ENCODE measurements at regions of chr5 and their contacts with region 1.

Region 1: GRCh38 chr5:180935203-180935602 is 36.2 kb downstream of the BTNL8 start:
- DNase-seq: no peak
- ATAC-seq: no peak
- H3K4me3 ChIP-seq: no peak overlapping the region
- H3K27ac ChIP-seq: no peak overlapping the region
- H3K4me1 ChIP-seq: no peaks in the 10 kb centered on the region
- H3K27me3 ChIP-seq: no peaks in the 10 kb centered on the region
- CTCF ChIP-seq: no peak
- POLR2A ChIP-seq: no peak
- RAD21 ChIP-seq: no peak

Region 2: DNA sequence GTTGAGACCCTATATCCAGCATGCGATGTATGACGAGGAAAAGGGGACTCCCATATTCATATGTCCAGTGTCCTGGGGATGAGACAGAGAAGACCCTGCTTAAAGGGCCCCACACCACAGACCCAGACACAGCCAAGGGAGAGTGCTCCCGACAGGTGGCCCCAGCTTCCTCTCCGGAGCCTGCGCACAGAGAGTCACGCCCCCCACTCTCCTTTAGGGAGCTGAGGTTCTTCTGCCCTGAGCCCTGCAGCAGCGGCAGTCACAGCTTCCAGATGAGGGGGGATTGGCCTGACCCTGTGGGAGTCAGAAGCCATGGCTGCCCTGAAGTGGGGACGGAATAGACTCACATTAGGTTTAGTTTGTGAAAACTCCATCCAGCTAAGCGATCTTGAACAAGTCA is 70.6 kb after region 1 on chr5:
- CTCF ChIA-PET with region 1: no interaction called
- POLR2A ChIA-PET with region 1: no interaction called
- dilution Hi-C with region 1: no loop called
- in situ Hi-C with region 1: loop called (anchors 5 kb)
- intact Hi-C with region 1: no loop called
- DNase-seq: no peak
- ATAC-seq: no peak
- H3K4me3 ChIP-seq: no peak overlapping the region
- H3K27ac ChIP-seq: no peak overlapping the region
- H3K4me1 ChIP-seq: no peaks in the 10 kb centered on the region
- H3K27me3 ChIP-seq: no peaks in the 10 kb centered on the region
- CTCF ChIP-seq: no peak
- POLR2A ChIP-seq: no peak
- RAD21 ChIP-seq: no peak

Region 3: DNA sequence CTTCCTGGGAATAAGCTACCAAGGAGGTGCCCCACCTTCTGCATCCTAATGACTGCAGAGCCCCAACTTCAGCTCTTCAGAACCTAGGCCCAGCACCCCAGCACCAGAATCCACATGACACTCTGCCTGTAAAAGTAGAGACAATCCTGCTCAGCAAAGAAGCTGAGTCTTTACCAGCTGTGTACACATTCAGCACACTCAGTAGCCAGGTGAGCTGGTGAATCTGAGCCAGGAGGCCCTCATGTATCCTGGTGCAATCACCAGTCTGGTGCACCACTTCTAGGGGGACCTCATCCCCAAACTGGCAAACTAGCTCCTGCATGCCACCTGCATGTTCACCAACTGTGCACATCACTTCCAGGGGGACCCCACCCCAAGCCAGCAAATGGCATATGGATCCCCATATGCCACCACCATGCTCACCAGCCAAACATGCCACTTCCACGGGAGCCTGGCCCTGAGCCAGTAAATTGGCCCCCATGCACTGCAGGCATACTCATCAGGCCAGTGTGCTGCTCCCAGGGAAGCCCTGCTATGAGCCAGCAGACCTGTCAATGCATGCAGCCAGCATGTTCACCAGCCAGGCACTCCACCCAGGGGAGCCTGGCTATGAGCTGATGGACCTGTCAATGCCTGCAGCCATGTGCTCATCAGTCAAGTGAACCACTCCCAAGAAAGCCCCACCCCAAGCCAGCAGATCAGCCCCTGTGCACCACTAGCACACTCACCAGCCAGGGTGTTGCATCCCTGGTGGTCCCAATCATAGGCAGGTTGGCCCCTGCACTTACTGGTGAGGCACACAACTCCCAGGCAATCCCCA is 89.3 kb after region 1 on chr5:
- CTCF ChIA-PET with region 1: no interaction called
- POLR2A ChIA-PET with region 1: no interaction called
- dilution Hi-C with region 1: no loop called
- in situ Hi-C with region 1: no loop called
- intact Hi-C with region 1: loop called (anchors 5 kb)
- DNase-seq: no peak
- ATAC-seq: no peak
- H3K4me3 ChIP-seq: no peak overlapping the region
- H3K27ac ChIP-seq: no peak overlapping the region
- H3K4me1 ChIP-seq: no peaks in the 10 kb centered on the region
- H3K27me3 ChIP-seq: no peaks in the 10 kb centered on the region
- CTCF ChIP-seq: no peak
- POLR2A ChIP-seq: no peak
- RAD21 ChIP-seq: no peak